Right ventricle myocardium superior (tissue), 1 donor: ENCODE measurements at regions of chr3 and their contacts with region 1.

Region 1: GRCh38 chr3:40580494-40581091 is 55.8 kb downstream of the ZNF621 start:
- DNase-seq: peak; percentile 66
- ATAC-seq: peak; percentile 51

Region 2: DNA sequence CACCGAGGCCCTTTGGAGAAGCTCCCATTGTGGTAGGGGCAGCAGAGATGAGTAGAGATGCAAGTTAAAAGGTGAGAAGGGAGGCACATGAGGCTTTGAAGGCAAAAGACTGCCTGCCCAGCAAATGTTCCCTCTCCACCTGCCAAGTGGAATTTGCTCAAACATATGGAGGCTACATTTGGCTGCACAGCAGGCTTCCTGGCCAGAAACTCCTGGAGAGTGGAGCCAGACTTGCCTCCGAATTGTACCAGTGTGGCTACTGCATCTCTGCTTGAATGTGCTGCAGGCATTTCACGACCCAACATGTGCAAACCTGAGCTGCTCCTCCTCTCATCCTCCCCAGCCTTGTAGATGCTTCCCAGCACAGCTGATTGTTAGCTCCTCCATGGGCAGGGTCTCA is 173.4 kb after region 1 on chr3:
- intact Hi-C with region 1: no loop called
- DNase-seq: no peak
- ATAC-seq: no peak

Region 3: DNA sequence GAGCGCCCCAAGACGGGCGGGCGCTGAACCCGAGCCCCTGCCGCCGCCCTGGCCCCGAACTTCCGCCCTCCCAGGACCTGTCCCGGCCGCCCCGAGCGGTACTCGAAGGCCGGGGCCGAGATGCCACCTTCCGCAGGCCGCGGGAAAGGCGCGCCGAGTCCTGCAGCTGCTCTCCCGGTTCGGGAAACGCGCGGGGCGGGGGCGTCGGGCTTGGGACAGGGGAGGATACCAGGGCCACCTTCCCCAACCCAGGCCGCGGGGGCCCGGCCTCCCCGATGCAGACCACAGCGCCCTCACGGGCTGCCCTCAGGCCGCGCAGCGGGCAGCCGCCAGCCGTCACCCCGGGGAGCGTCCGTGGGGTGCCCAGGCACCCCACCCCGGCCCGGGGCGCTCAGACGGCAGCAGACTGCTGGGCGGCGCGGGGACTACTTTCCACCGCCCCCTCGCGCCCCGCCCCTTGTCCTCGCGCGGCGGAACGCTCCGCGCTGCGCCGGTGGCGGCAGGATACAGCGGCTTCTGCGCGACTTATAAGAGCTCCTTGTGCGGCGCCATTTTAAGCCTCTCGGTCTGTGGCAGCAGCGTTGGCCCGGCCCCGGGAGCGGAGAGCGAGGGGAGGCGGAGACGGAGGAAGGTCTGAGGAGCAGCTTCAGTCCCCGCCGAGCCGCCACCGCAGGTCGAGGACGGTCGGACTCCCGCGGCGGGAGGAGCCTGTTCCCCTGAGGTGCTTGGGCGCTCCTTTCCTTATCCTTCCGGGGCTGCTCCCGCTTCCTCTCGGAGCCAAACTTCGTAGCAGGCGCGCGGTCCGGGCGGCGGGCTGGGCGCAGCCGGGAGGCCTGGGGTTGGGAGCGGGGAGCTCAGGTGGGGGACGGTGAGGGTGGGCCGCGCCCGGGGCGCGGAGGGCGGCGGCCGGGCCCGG is 618.6 kb after region 1 on chr3 and contains the start of gene CTNNB1:
- intact Hi-C with region 1: loop called (anchors 10 kb)
- DNase-seq: peak; percentile 96
- ATAC-seq: peak; percentile 96
- total RNA-seq, gene CTNNB1: 152 TPM

Region 4: DNA sequence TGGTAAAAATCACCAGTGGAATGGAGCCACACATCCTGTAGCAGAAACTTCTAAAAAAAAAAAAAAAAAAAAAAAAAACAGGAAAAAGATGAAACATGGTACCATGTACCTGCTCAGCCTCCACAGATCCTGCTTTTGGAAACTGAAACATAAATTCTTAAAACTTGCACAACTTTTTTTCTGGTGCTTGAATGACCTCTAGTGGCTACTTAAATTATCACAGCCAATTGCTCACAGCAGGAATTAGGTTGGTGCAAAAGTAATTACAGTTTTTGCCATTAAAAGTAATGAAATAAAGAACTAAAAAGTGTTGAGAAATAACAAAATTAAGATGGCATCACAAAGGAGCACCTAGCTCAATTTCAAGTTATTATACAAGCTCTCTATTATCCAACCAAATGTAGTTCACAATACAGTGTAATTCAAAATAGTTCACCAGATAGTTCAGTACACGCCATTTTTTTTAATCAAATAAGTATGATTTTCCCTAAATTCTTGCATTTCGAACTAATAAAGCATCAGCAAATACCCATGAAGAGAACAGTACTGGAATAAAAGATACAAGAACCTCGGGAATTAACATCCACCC is 1300.7 kb after region 1 on chr3:
- intact Hi-C with region 1: loop called (anchors 2 kb)
- DNase-seq: no peak
- ATAC-seq: no peak